Activated naive CD4-positive, alpha-beta T cell treated with anti-CD3 and anti-CD28 coated beads, Interleukin-2, amount 10 ng/mL, durations not matched to agents 7 days and 5 days (primary cell): ENCODE measurements at regions of chr12 and their contacts with region 1.

Region 1: DNA sequence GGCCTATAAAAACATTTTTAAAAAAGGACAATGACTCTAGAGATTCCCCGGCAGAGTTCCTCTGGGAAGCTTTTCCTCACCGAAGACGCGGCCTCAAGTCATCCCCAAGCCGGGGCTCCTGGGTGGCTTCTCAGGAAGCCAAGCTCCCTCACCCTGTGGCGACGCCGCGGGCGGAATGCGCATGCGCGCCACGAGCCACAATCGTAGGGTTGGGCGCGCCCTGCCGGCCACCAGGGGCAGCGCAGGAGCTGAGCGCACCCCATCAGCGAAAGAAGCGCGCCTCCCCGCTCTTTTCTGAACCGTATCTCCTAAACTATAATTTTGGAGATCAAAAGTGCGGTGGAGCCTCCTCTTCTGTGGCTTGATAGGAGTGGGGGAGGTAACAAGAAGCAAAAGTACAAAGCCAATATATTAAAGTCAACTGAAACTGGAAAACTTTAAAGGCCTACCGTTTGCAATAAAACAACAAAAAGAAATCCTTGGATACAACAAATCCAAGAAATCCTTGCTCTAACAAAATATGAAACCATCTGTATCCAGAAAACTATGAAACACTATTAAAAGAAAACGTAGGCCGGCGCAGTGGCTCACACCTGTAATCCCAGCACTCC is 17.4 kb upstream of the CHFR start:
- DNase-seq: peak; percentile 91
- H3K4me3 Mint-ChIP-seq: peak overlapping the region; percentile 15
- H3K27ac Mint-ChIP-seq: peak overlapping the region; percentile 76
- H3K4me1 Mint-ChIP-seq: peaks cover 23% of the 10 kb centered on the region
- H3K27me3 Mint-ChIP-seq: peaks cover 31% of the 10 kb centered on the region

Region 2: DNA sequence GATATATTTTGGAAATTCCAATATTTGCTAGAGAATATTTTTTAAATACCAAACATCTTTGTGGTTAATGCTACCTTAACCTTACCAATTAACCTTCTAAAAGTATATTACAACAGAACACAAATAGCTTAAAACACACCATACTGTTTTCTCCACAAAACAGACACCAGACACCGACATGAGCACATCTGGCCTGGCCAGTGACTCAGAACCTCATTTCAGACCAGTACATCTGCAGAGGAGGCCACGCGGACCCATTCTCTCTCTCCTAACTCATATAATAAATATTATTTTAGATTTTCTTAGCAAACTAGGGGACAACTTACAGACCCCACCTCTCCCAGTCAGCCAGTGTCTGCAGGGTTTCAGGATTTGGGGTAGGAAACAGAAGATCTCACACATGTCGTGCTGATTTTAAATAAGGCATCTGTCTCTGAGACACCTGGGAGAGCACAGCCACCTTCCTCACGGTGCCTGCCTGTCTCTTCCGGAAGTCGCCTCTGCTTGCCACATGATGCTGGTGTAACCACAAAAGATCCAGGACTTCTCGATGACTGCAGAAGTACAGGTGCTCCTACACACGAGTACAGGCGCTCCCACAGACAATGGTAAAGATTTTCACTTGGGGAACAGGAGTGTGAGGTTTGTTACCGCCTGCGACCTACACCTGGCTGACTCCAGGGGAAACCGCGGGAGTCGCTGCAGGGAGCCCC is 133.5 kb before region 1 on chr12:
- CTCF ChIA-PET with region 1: interaction called, 16 read pairs
- DNase-seq: peak; percentile 74
- H3K4me3 Mint-ChIP-seq: no peak overlapping the region
- H3K27ac Mint-ChIP-seq: peak overlapping the region; percentile 81
- H3K4me1 Mint-ChIP-seq: peaks cover 60% of the 10 kb centered on the region
- H3K27me3 Mint-ChIP-seq: no peaks in the 10 kb centered on the region

Region 3: DNA sequence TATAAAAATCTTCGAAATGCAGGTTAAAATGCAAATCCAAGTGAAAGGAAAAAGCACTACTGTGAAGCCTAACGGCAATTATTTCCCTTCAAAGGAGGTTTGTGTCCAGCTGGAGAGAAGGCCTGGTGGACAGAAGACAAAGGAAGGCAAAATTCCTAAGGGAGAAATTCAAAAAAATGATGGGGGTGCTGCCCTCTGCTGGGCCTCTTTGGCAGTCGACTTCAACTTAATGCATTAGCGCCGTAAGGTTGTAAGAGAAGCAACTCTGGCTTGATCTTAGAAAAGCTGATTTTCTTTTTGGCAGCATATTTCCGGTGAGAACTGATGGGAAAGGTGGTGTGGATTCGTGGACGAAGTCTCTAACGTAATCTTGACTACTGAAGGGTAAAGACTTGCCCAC is 16.9 kb after region 1 on chr12:
- CTCF ChIA-PET with region 1: no interaction called
- DNase-seq: no peak
- H3K4me3 Mint-ChIP-seq: no peak overlapping the region
- H3K27ac Mint-ChIP-seq: no peak overlapping the region
- H3K4me1 Mint-ChIP-seq: no peaks in the 10 kb centered on the region
- H3K27me3 Mint-ChIP-seq: no peaks in the 10 kb centered on the region